Activated CD8-positive, alpha-beta memory T cell treated with anti-CD3 and anti-CD28 coated beads, Interleukin-2, amount 10 ng/mL, durations not matched to agents 7 days and 5 days (primary cell): ENCODE measurements at regions of chr5 and their contacts with region 1.

Region 1: GRCh38 chr5:59174248-59174844 is 591.5 kb downstream of the RAB3C start:
- DNase-seq: peak; percentile 57
- ATAC-seq: peak; percentile 77
- H3K4me3 Mint-ChIP-seq: no peak overlapping the region
- H3K27ac Mint-ChIP-seq: no peak overlapping the region
- H3K4me1 Mint-ChIP-seq: peaks cover 40% of the 10 kb centered on the region
- H3K27me3 Mint-ChIP-seq: no peaks in the 10 kb centered on the region

Region 2: DNA sequence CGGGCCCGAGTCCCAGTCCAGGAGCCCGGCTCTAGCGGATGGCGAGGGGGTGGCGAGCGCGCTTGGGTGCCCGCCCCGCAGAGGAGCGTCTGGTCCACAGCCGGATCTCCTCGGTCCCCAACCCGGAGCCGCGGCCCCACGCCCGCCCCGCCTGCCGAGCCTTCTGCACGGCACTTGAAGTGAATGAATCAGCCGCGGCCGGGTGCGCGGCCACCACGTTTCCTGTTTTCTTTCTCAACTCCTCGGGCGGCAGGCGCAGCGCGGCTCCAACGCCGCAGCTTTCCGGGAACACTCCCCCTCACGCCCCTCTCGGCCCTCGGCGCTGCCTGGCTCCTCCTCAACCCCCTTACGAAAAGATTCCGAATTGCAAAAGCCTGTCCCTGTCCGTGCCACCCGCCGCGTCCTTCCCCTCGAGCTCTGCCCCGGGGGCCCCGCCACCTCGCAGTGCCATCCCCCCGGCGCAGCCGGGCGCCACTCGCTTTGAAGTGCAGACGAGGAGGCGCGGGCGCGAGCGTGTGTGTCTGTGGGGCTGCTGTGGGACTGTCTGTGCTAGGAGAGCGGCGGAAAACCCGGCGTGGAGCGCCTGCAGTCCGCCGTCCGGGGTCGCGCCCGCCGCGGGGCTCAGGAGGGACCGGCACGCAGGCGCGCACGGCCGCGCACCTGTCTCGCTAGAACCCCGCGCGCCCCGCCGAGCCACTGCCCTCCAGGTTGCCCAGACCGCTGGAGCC is 134.9 kb before region 1 on chr5:
- CTCF ChIA-PET with region 1: interaction called, 82 read pairs
- DNase-seq: peak; percentile 97
- ATAC-seq: peak; percentile 81
- H3K4me3 Mint-ChIP-seq: peak overlapping the region; percentile 89
- H3K27ac Mint-ChIP-seq: peak overlapping the region; percentile 98
- H3K4me1 Mint-ChIP-seq: peaks cover 47% of the 10 kb centered on the region
- H3K27me3 Mint-ChIP-seq: no peaks in the 10 kb centered on the region

Region 3: DNA sequence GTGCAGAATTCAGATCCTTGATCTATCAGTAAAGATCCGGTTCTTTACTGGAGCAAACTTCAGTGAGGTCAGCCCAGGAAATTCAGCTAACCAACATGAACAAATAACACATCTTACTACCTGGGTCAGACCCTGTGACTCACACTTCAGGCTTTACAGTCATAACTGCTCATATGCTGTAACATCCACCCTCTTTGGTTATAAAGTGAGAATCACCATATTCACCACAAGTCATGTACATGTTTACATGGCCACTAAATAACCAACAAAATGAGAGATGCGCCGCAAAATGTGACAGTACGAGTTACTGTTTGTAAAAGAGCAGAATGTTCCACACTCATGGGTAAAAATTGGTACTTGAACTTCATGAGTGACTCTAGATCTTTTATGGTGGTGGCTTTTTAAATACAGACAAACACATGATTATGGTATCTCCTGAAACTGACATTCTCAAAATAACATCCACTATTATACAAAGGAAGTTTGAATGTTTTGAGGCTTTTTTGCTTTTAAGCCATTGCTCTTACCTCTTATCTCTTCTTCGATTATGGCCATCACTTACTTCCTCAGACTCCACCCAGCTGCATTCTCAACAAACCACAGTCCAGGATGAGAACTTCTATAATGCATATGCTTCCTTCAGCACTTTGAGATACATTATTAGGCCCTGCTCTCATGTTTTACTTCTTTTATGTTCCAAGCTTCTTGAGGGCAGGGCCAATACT is 74.9 kb before region 1 on chr5:
- CTCF ChIA-PET with region 1: interaction called, 11 read pairs
- DNase-seq: peak; percentile 89
- ATAC-seq: peak; percentile 98
- H3K4me3 Mint-ChIP-seq: peak overlapping the region; percentile 52
- H3K27ac Mint-ChIP-seq: peak overlapping the region; percentile 93
- H3K4me1 Mint-ChIP-seq: peaks cover 61% of the 10 kb centered on the region
- H3K27me3 Mint-ChIP-seq: no peaks in the 10 kb centered on the region

Region 4: GRCh38 chr5:59126708-59127573 is 47.4 kb before region 1 on chr5:
- CTCF ChIA-PET with region 1: interaction called, 29 read pairs
- DNase-seq: no peak
- ATAC-seq: peak; percentile 6
- H3K4me3 Mint-ChIP-seq: no peak overlapping the region
- H3K27ac Mint-ChIP-seq: no peak overlapping the region
- H3K4me1 Mint-ChIP-seq: peaks cover 13% of the 10 kb centered on the region
- H3K27me3 Mint-ChIP-seq: no peaks in the 10 kb centered on the region

Region 5: GRCh38 chr5:59143926-59144333 is 30.4 kb before region 1 on chr5:
- CTCF ChIA-PET with region 1: interaction called, 10 read pairs
- DNase-seq: no peak
- ATAC-seq: peak; percentile 70
- H3K4me3 Mint-ChIP-seq: no peak overlapping the region
- H3K27ac Mint-ChIP-seq: no peak overlapping the region
- H3K4me1 Mint-ChIP-seq: peaks cover 11% of the 10 kb centered on the region
- H3K27me3 Mint-ChIP-seq: no peaks in the 10 kb centered on the region

Region 6: DNA sequence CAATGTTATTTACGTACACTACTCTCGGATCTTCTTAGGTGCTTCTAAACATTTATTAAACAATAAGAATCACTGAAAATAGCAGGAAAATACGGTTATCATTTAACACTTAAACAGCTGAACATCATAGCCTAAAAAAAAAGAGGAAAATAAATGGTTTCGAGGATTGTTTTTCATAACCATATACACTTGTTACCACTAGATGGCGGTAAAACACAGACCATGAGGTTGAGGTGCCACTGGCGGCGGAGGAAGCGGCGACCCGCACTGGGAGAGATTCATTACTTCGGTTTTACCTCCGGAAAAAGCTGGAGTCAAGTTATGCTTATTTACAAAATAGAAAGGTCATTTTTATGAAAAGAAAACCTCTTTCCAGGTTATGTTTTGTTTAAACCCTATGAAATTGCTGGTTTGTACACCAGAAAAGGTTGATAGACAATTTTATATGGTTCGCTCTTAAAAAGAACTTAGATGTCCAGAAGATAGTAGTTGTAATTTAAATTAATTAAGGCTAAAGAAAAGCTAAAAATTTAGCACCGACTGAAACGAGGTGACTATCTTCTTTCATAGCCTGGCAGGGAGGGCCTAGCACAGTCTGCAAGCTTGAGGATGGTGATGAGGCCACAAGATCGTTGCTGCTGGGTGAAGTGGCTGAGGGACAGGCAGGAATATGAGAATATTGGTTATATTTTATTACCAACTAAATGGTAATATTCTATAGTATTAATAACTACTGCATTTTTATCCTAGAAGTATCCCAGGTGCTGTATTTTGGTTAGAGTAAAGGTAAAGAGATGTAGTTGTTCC is 14.3 kb after region 1 on chr5:
- CTCF ChIA-PET with region 1: interaction called, 31 read pairs
- DNase-seq: peak; percentile 75
- ATAC-seq: peak; percentile 78
- H3K4me3 Mint-ChIP-seq: peak overlapping the region; percentile 21
- H3K27ac Mint-ChIP-seq: no peak overlapping the region
- H3K4me1 Mint-ChIP-seq: peaks cover 13% of the 10 kb centered on the region
- H3K27me3 Mint-ChIP-seq: peaks cover 42% of the 10 kb centered on the region

Region 7: GRCh38 chr5:59367791-59368394 is 193.5 kb after region 1 on chr5:
- CTCF ChIA-PET with region 1: interaction called, 13 read pairs
- DNase-seq: peak; percentile 62
- ATAC-seq: no peak
- H3K4me3 Mint-ChIP-seq: no peak overlapping the region
- H3K27ac Mint-ChIP-seq: no peak overlapping the region
- H3K4me1 Mint-ChIP-seq: peaks cover 13% of the 10 kb centered on the region
- H3K27me3 Mint-ChIP-seq: peaks cover 36% of the 10 kb centered on the region